PC-3 (cell line): ENCODE measurements at regions of chr17 and their contacts with region 1.

Region 1: GRCh38 chr17:37438141-37438540 is 31.5 kb downstream of the TADA2A start:
- DNase-seq: peak; percentile 19
- ATAC-seq: no peak
- H3K4me3 ChIP-seq: no peak overlapping the region
- H3K27ac ChIP-seq: no peak overlapping the region
- H3K4me1 ChIP-seq: no peaks in the 10 kb centered on the region
- H3K27me3 ChIP-seq: no peaks in the 10 kb centered on the region
- CTCF ChIP-seq: peak; percentile 55

Region 2: GRCh38 chr17:37299257-37299980 is 138.7 kb before region 1 on chr17:
- CTCF ChIA-PET with region 1: no interaction called
- POLR2A ChIA-PET with region 1: interaction called, 18 read pairs
- intact Hi-C with region 1: no loop called
- DNase-seq: no peak
- ATAC-seq: no peak
- H3K4me3 ChIP-seq: no peak overlapping the region
- H3K27ac ChIP-seq: no peak overlapping the region
- H3K4me1 ChIP-seq: peaks cover 4% of the 10 kb centered on the region; the same call in 1 of the 2 replicates
- H3K27me3 ChIP-seq: no peaks in the 10 kb centered on the region
- CTCF ChIP-seq: no peak